ENCODE measurements at regions of chr19 and their contacts with region 1.

Region 1: DNA sequence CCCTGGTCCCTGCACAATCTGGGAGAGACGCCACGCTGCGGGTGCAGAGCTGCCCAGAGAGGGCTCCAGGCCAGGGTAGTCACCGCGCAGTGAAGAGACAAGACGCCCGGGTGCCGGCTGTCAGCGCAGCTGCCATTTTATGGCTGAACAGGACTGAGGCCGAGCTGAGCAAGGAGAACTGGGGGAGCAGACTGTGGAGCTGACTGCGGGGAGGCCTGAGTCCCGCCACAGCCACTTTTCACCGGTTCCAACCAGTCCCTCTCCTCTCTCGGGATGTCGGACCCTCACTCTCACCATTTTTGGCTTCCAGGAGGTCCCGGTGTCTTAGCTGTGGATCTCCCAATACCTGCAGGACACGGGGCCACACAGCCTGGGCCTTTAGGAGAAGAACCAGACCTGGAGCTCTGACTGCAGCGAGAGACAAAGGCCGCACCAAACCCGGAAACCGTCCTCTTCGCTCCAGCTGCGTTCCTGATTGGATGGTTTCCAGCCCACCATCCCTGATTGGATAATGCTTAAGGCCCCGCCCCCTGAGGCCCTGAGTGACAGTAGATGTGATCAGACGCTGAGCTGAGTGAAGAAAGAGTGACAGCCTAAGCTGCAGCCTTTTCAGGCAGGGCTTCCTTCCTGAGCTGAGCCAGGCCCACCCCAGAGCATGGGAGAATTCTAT is at the start of gene ZNF626:
- DNase-seq: peak; percentile 80
- ATAC-seq: peak; percentile 98
- H3K4me3 Mint-ChIP-seq: peak within 1 kb of the TSS; percentile 95
- H3K27ac Mint-ChIP-seq: peak within 1 kb of the TSS; percentile 95
- H3K4me1 Mint-ChIP-seq: peaks cover 49% of the 10 kb centered on the region
- H3K27me3 Mint-ChIP-seq: no peaks in the 10 kb centered on the region
- CTCF ChIP-seq: no peak
- total RNA-seq, gene ZNF626: 16.1 and 17.2 TPM in 2 replicates

Region 2: GRCh38 chr19:20565321-20566018 is 95.8 kb before region 1 on chr19 and contains the start of gene ZNF737:
- CTCF ChIA-PET with region 1: no interaction called
- POLR2A ChIA-PET with region 1: interaction called, 62 read pairs
- intact Hi-C with region 1: loop called (anchors 1 kb)
- DNase-seq: peak; percentile 72
- ATAC-seq: peak; percentile 90
- H3K4me3 Mint-ChIP-seq: peak within 1 kb of the TSS; percentile 99
- H3K27ac Mint-ChIP-seq: peak within 1 kb of the TSS; percentile 99
- H3K4me1 Mint-ChIP-seq: peaks cover 32% of the 10 kb centered on the region
- H3K27me3 Mint-ChIP-seq: no peaks in the 10 kb centered on the region
- CTCF ChIP-seq: no peak
- total RNA-seq, gene ZNF737: 42.7 and 50.9 TPM in 2 replicates

Region 3: GRCh38 chr19:20616071-20616470 is 45.2 kb before region 1 on chr19:
- CTCF ChIA-PET with region 1: no interaction called
- POLR2A ChIA-PET with region 1: no interaction called
- intact Hi-C with region 1: no loop called
- DNase-seq: no peak
- ATAC-seq: no peak
- H3K4me3 Mint-ChIP-seq: no peak overlapping the region
- H3K27ac Mint-ChIP-seq: no peak overlapping the region
- H3K4me1 Mint-ChIP-seq: peaks cover 1% of the 10 kb centered on the region
- H3K27me3 Mint-ChIP-seq: no peaks in the 10 kb centered on the region
- CTCF ChIP-seq: no peak

Region 4: GRCh38 chr19:20999731-21000352 is 338.6 kb after region 1 on chr19:
- CTCF ChIA-PET with region 1: no interaction called
- POLR2A ChIA-PET with region 1: interaction called, 6 read pairs
- intact Hi-C with region 1: loop called (anchors 2 kb)
- DNase-seq: peak; percentile 74
- ATAC-seq: peak; percentile 100
- H3K4me3 Mint-ChIP-seq: peak overlapping the region; percentile 91
- H3K27ac Mint-ChIP-seq: peak overlapping the region; percentile 70
- H3K4me1 Mint-ChIP-seq: peaks cover 6% of the 10 kb centered on the region
- H3K27me3 Mint-ChIP-seq: no peaks in the 10 kb centered on the region
- CTCF ChIP-seq: no peak

Region 5: GRCh38 chr19:21082011-21082975 is 421.0 kb after region 1 on chr19 and contains the start of gene ZNF714:
- CTCF ChIA-PET with region 1: no interaction called
- POLR2A ChIA-PET with region 1: no interaction called
- intact Hi-C with region 1: loop called (anchors 1 kb)
- DNase-seq: peak; percentile 63
- ATAC-seq: peak; percentile 100
- H3K4me3 Mint-ChIP-seq: peak within 1 kb of the TSS; percentile 100
- H3K27ac Mint-ChIP-seq: peak within 1 kb of the TSS; percentile 93
- H3K4me1 Mint-ChIP-seq: peaks cover 13% of the 10 kb centered on the region
- H3K27me3 Mint-ChIP-seq: no peaks in the 10 kb centered on the region
- CTCF ChIP-seq: no peak
- total RNA-seq, gene ZNF714: 11.1 and 12.5 TPM in 2 replicates

Region 6: DNA sequence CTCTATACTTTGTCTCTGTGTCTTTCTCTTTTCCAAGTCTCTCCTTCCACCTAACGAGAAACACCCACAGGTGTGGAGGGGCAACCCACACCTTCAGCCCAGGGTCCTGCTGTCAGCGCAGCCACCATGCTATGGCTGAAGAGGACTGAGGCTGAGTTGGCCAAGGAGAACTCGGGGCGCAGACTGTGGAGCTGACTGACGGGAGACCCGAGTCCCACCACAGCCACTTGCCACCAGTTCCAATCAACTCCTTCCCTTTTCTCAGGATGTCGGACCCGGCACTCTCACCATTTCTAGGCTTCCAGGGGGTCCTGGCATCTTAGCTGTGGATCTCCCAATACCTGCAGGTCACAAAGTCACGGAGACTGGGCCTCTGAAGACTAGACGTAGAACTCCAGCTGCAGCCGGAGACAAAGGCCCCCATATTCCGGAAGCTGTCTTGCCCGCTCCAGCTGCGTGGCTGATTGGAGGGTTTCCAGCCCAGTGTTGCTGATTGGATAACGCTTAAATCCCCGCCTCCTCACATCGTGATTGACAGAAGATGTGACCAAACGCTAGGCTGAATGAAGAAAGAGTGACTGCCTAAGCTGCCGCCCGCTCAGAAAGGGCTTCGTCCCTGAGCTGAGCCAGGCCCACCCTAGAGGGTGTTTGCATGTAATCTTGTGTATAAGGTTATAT is 907.7 kb after region 1 on chr19:
- CTCF ChIA-PET with region 1: no interaction called
- POLR2A ChIA-PET with region 1: interaction called, 5 read pairs
- intact Hi-C with region 1: loop called (anchors 5 kb)
- DNase-seq: peak; percentile 58
- ATAC-seq: peak; percentile 94
- H3K4me3 Mint-ChIP-seq: peak overlapping the region; percentile 99
- H3K27ac Mint-ChIP-seq: peak overlapping the region; percentile 96
- H3K4me1 Mint-ChIP-seq: peaks cover 19% of the 10 kb centered on the region
- H3K27me3 Mint-ChIP-seq: no peaks in the 10 kb centered on the region
- CTCF ChIP-seq: no peak

Measured in activated B cell treated with CpG ODN at 0.5 μM for 24 hours (primary cell).